ENCODE measurements at regions of chr12 and their contacts with region 1.

Region 1: GRCh38 chr12:66959272-66959671 is 280.4 kb upstream of the GRIP1 start:
- DNase-seq: peak; percentile 77
- ATAC-seq: peak; percentile 26
- H3K4me3 ChIP-seq: no peak overlapping the region
- H3K27ac ChIP-seq: no peak overlapping the region
- H3K4me1 ChIP-seq: peaks cover 38% of the 10 kb centered on the region
- H3K27me3 ChIP-seq: no peaks in the 10 kb centered on the region
- CTCF ChIP-seq: no peak

Region 2: GRCh38 chr12:66942741-66943465 is 16.4 kb before region 1 on chr12:
- CTCF ChIA-PET with region 1: no interaction called
- POLR2A ChIA-PET with region 1: no interaction called
- intact Hi-C with region 1: no loop called
- DNase-seq: no peak
- ATAC-seq: no peak
- H3K4me3 ChIP-seq: no peak overlapping the region
- H3K27ac ChIP-seq: no peak overlapping the region
- H3K4me1 ChIP-seq: peaks cover 11% of the 10 kb centered on the region
- H3K27me3 ChIP-seq: no peaks in the 10 kb centered on the region
- CTCF ChIP-seq: peak; percentile 28; the same call in 1 of the 2 replicates

Region 3: GRCh38 chr12:67034492-67034891 is 75.2 kb after region 1 on chr12:
- CTCF ChIA-PET with region 1: no interaction called
- POLR2A ChIA-PET with region 1: no interaction called
- intact Hi-C with region 1: loop called (anchors 5 kb)
- DNase-seq: peak; percentile 96
- ATAC-seq: peak; percentile 86
- H3K4me3 ChIP-seq: peak overlapping the region; percentile 20; the same call in 1 of the 2 replicates
- H3K27ac ChIP-seq: peak overlapping the region; percentile 77
- H3K4me1 ChIP-seq: peaks cover 38% of the 10 kb centered on the region
- H3K27me3 ChIP-seq: no peaks in the 10 kb centered on the region
- CTCF ChIP-seq: no peak

Measured in PC-3 (cell line).